CD8-positive, alpha-beta T cell (primary cell): ENCODE measurements at regions of chr13 and their contacts with region 1.

Region 1: DNA sequence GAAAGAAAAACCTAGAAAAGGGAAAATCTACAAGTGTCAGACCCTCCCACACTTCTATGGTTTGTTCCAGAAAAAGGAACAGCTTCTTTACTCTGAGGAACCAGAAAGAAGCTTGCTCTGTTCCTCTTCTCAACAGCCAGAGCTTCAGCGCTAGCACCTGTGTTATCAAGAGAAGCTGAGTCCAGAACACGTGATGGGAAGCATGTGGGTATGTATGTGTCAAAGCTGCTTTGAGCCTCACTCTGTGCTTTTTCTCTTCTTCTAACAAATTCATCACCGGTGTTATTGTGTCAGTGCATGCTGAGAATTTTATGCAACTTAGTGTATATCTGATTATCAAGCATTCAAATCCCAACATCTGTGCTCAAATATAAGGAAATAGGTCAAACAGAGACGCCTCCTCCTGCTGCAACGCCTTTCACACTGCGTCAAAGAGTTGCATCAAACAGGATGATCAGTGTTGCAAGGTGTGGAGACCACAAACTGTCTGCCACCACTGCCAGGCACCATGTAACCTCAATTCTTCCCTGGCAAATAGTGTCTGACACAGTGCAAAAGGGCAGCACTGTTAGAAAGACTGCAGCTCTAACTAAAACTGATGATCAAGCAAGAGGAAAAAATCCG is 83.9 kb downstream of the LRRC63 start:
- DNase-seq: peak; percentile 46 to 96 (median 70)
- ATAC-seq: peak; percentile 81
- H3K4me3 ChIP-seq: peak overlapping the region; percentile 11 to 16
- H3K4me3 Mint-ChIP-seq: peak overlapping the region; percentile 60
- H3K27ac ChIP-seq: peak overlapping the region; percentile 69 to 79
- H3K27ac Mint-ChIP-seq: peak overlapping the region; percentile 96
- H3K4me1 ChIP-seq: peaks cover 49% of the 10 kb centered on the region
- H3K4me1 Mint-ChIP-seq: peaks cover 65% of the 10 kb centered on the region
- H3K27me3 ChIP-seq: no peaks in the 10 kb centered on the region
- H3K27me3 Mint-ChIP-seq: no peaks in the 10 kb centered on the region
- CTCF ChIP-seq: no peak

Region 2: GRCh38 chr13:46176756-46177155 is 118.8 kb before region 1 on chr13:
- CTCF ChIA-PET with region 1: interaction called, 22 read pairs
- POLR2A ChIA-PET with region 1: interaction called, 20 read pairs
- intact Hi-C with region 1: loop called in 1 of 2 experiments (anchors 5 kb)
- DNase-seq: peak in 1 of 9 experiments; percentile 62
- ATAC-seq: no peak
- H3K4me3 ChIP-seq: peak overlapping the region; percentile 40
- H3K4me3 Mint-ChIP-seq: peak overlapping the region; percentile 79
- H3K27ac ChIP-seq: peak overlapping the region; percentile 51 to 94
- H3K27ac Mint-ChIP-seq: peak overlapping the region; percentile 94
- H3K4me1 ChIP-seq: peaks cover 66% of the 10 kb centered on the region
- H3K4me1 Mint-ChIP-seq: peaks cover 66% of the 10 kb centered on the region
- H3K27me3 ChIP-seq: no peaks in the 10 kb centered on the region
- H3K27me3 Mint-ChIP-seq: no peaks in the 10 kb centered on the region
- CTCF ChIP-seq: no peak

Region 3: GRCh38 chr13:46211483-46212351 is 83.9 kb before region 1 on chr13 and contains the start of gene LRRC63:
- CTCF ChIA-PET with region 1: interaction called, 4 read pairs
- POLR2A ChIA-PET with region 1: interaction called, 4 read pairs
- intact Hi-C with region 1: loop called in 1 of 2 experiments (anchors 1 kb)
- DNase-seq: peak; percentile 58 to 91 (median 84)
- ATAC-seq: peak; percentile 92
- H3K4me3 ChIP-seq: peak within 1 kb of the TSS; percentile 69 to 73
- H3K4me3 Mint-ChIP-seq: peak within 1 kb of the TSS; percentile 86
- H3K27ac ChIP-seq: peak within 1 kb of the TSS; percentile 74 to 90
- H3K27ac Mint-ChIP-seq: peak within 1 kb of the TSS; percentile 93
- H3K4me1 ChIP-seq: peaks cover 13% of the 10 kb centered on the region
- H3K4me1 Mint-ChIP-seq: peaks cover 19% of the 10 kb centered on the region
- H3K27me3 ChIP-seq: no peaks in the 10 kb centered on the region
- H3K27me3 Mint-ChIP-seq: no peaks in the 10 kb centered on the region
- CTCF ChIP-seq: no peak
- total RNA-seq, gene LRRC63: 0.22 to 0.31 TPM

Region 4: DNA sequence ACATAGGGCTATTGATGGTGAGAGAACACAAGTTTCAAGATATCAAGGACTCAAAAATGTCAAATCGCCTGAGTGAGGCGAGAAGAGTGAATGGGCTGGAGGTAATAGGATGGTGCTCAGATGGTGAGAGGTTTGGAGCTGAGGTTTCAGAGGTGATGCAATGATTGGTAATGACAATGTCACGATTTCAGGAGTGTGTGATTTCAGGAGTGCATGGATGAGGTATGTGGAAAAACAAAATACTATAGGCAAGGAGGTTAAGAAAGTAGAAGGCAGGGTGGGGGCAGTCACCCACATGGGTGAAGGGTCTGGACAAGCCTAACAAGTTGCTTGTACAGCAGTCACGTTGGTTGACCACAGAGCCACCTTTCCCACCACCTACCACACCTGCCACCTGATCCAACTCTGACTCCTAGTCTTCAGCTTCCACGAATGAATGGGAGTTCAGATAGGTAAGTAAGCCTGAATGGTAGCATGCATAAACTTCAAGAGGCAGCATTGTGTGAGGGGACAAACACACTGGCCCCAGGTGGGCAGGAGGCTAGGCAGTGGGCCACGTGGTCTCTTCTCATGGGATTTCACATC is 20.0 kb after region 1 on chr13:
- CTCF ChIA-PET with region 1: interaction called, 97 read pairs
- POLR2A ChIA-PET with region 1: interaction called, 25 read pairs
- intact Hi-C with region 1: loop called in 1 of 2 experiments (anchors 2 kb)
- DNase-seq: no peak
- ATAC-seq: no peak
- H3K4me3 ChIP-seq: no peak overlapping the region
- H3K4me3 Mint-ChIP-seq: no peak overlapping the region
- H3K27ac ChIP-seq: no peak overlapping the region
- H3K27ac Mint-ChIP-seq: no peak overlapping the region
- H3K4me1 ChIP-seq: peaks cover 13% of the 10 kb centered on the region
- H3K4me1 Mint-ChIP-seq: peaks cover 54% of the 10 kb centered on the region
- H3K27me3 ChIP-seq: no peaks in the 10 kb centered on the region
- H3K27me3 Mint-ChIP-seq: no peaks in the 10 kb centered on the region
- CTCF ChIP-seq: no peak